ENCODE measurements at regions of chr6 and their contacts with region 1.

Region 1: DNA sequence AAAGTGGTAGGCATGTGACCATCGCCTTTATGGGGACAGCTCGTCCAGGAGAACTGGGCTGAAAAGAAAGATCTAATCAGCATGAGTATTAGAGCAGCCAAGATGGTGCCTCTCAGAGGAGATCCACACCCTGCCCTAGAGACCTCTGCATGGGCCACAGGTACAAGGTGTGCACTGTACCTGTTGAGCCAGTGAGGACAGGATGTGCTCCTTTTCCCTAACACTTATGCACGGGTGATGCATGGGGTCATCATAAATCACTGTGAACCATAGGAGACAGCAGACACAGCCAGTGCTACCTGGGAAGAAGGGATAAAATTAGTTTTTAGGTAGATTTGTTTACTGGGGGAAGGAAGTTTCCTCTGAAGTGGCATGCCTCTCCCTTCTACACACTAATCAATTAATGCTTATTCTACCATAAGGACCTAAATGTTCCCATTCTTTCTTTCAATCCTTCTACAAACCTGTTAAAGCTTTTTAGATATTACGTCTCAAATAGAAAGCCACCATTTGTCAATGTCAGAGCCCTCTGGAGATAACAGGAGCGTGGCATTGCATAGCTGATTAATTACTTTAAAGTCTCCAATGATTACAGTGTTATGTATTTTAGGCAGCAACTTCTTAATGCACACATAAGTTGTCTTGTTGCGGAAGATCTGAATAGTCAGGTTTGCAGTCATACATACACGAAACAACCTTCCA is 13.6 kb downstream of the SLC17A2 start:
- DNase-seq: no peak
- H3K4me3 Mint-ChIP-seq: no peak overlapping the region
- H3K27ac Mint-ChIP-seq: no peak overlapping the region
- H3K4me1 Mint-ChIP-seq: peaks cover 3% of the 10 kb centered on the region
- H3K27me3 Mint-ChIP-seq: no peaks in the 10 kb centered on the region

Region 2: DNA sequence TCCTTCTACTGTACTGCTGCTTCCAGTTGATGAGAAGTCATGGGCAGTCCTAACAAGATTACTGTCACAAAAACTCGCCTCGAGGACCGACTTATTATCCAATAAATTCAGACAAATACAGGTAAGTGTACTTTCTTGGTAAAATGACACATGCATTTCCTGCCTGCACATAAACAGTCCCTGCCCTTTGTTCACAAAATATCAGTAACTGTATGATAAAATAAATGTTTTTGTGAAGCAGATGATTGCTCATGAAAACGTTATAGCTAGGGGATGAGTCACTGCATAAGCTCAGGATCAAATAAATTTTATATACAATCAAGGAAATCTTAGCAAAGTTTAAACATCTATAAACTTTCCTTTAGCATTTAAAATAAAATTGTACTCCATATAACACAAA is 816.7 kb before region 1 on chr6:
- CTCF ChIA-PET with region 1: no interaction called
- POLR2A ChIA-PET with region 1: no interaction called
- DNase-seq: no peak
- H3K4me3 Mint-ChIP-seq: no peak overlapping the region
- H3K27ac Mint-ChIP-seq: no peak overlapping the region
- H3K4me1 Mint-ChIP-seq: peaks cover 17% of the 10 kb centered on the region
- H3K27me3 Mint-ChIP-seq: no peaks in the 10 kb centered on the region

Region 3: DNA sequence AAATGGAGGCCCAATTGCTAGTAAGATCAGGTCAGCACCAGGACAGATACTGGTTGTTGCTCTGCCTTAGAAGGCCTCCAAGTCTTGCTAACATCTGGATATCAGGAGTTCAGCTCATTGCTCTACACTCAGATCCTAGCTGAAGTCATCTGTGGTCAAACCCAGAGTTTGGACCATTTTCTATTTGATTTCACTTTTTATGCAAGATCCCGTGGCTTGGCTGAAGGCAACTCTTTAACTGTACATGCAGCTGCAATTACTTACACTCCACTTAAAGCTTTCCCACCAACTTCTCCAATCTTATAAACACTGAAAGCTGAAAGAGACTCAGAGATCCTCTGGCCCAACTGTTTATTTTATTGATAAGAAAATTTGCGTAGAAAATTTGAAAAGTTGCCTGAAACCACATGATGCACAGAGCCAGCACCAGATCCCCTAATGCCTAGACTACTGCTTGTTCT is 10.8 kb after region 1 on chr6:
- CTCF ChIA-PET with region 1: interaction called, 16 read pairs
- POLR2A ChIA-PET with region 1: no interaction called
- DNase-seq: no peak
- H3K4me3 Mint-ChIP-seq: no peak overlapping the region
- H3K27ac Mint-ChIP-seq: no peak overlapping the region
- H3K4me1 Mint-ChIP-seq: no peaks in the 10 kb centered on the region
- H3K27me3 Mint-ChIP-seq: no peaks in the 10 kb centered on the region